H1 (cell line): ENCODE measurements at regions of chr2 and their contacts with region 1.

Region 1: DNA sequence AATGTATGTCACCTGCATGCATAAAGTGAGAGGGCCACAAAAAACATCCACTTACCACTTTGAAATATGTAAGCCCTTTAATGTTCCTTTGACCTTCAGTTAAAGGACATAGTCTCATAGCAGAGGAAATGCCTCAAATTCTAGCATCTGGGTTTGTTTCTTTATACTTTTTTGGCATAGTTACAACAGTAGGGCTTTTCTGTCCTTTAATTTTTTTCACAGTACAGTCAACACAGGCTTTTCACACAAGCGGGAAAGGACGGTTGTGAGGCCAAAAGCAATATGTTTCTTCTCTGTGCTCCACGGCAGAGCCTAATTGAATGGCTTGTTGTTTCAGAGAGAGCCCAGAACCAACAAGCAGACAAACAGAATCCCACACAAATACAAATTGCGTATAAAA is 57.6 kb downstream of the CRIM1 start:
- DNase-seq: no peak
- H3K4me3 ChIP-seq: no peak overlapping the region
- H3K27ac ChIP-seq: no peak overlapping the region
- H3K4me1 ChIP-seq: peaks cover 4 to 17% (median 8%) of the 10 kb centered on the region in 4 experiments; a peak in 6 of 7 replicates
- H3K27me3 ChIP-seq: no peaks in the 10 kb centered on the region
- CTCF ChIP-seq: no peak
- EP300 ChIP-seq: no peak
- POLR2A ChIP-seq: no peak
- RAD21 ChIP-seq: no peak

Region 2: DNA sequence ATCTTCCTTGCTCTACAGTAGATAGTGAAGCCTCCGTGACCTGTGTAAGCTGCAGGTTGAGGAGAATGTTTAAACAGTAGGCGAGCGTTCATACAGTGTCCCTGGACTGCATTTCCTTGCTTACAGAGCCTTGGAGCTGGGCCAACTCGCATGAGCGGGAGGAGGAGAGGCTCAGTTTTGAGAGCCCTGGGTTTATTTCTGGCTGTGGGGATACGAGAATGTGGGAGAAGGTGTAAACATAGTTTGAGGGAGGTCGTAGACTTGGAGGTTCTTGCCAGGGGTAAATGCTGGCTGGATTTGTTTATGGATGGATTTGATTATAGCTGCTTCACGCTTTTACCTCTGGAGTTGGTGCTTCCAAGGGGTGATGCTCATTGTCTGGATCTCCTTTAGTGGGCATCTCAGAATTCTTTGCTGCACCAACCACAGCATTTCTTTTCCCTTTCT is 36.9 kb before region 1 on chr2:
- CTCF ChIA-PET with region 1: interaction called, 11 read pairs
- POLR2A ChIA-PET with region 1: interaction called, 3 read pairs
- DNase-seq: no peak
- H3K4me3 ChIP-seq: peak overlapping the region in 2 of 4 experiments; percentile 11 to 14; a peak in 5 of 8 replicates
- H3K27ac ChIP-seq: no peak overlapping the region
- H3K4me1 ChIP-seq: peaks cover 7 to 37% (median 35%) of the 10 kb centered on the region in 4 experiments
- H3K27me3 ChIP-seq: no peaks in the 10 kb centered on the region
- CTCF ChIP-seq: no peak
- EP300 ChIP-seq: no peak
- POLR2A ChIP-seq: no peak
- RAD21 ChIP-seq: no peak

Region 3: GRCh38 chr2:36433311-36434217 is 20.3 kb after region 1 on chr2:
- CTCF ChIA-PET with region 1: interaction called, 10 read pairs
- POLR2A ChIA-PET with region 1: interaction called, 6 read pairs
- DNase-seq: no peak
- H3K4me3 ChIP-seq: no peak overlapping the region
- H3K27ac ChIP-seq: no peak overlapping the region
- H3K4me1 ChIP-seq: peaks cover 3 to 13% (median 6%) of the 10 kb centered on the region in 4 experiments; a peak in 4 of 7 replicates
- H3K27me3 ChIP-seq: no peaks in the 10 kb centered on the region
- CTCF ChIP-seq: no peak
- EP300 ChIP-seq: no peak
- POLR2A ChIP-seq: no peak
- RAD21 ChIP-seq: no peak